Activated CD8-positive, alpha-beta T cell treated with anti-CD3 and anti-CD28 coated beads for 36 hours (primary cell): ENCODE measurements at regions of chr6 and their contacts with region 1.

Region 1: DNA sequence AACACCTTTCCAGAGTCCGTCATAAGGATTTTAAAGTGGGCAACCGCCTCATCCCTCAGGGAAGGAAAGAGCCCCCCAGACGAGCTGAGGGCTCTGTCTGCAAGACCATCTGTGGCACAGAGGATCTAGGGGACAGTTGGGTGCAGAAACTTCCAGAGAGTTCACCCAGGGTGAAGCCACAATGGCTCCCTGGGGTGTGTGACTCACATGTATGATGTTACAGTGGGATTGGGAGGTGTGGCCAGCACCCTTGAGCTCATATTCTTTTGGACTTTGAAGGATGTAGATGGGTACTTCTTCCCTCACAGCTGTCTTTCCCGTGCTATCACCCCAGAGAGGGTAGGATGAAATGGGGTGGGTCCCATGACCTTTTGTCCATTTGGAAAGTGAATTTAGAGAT is 95.5 kb downstream of the NCR2 start:
- DNase-seq: no peak
- ATAC-seq: no peak
- H3K4me3 Mint-ChIP-seq: no peak overlapping the region
- H3K27ac Mint-ChIP-seq: no peak overlapping the region
- H3K4me1 Mint-ChIP-seq: peaks cover 14% of the 10 kb centered on the region
- H3K27me3 Mint-ChIP-seq: peaks cover 19% of the 10 kb centered on the region
- CTCF ChIP-seq: no peak

Region 2: GRCh38 chr6:41280381-41281057 is 150.4 kb before region 1 on chr6:
- CTCF ChIA-PET with region 1: no interaction called
- POLR2A ChIA-PET with region 1: no interaction called
- intact Hi-C with region 1: no loop called
- DNase-seq: no peak
- ATAC-seq: no peak
- H3K4me3 Mint-ChIP-seq: no peak overlapping the region
- H3K27ac Mint-ChIP-seq: no peak overlapping the region
- H3K4me1 Mint-ChIP-seq: peaks cover 12% of the 10 kb centered on the region
- H3K27me3 Mint-ChIP-seq: no peaks in the 10 kb centered on the region
- CTCF ChIP-seq: no peak

Region 3: DNA sequence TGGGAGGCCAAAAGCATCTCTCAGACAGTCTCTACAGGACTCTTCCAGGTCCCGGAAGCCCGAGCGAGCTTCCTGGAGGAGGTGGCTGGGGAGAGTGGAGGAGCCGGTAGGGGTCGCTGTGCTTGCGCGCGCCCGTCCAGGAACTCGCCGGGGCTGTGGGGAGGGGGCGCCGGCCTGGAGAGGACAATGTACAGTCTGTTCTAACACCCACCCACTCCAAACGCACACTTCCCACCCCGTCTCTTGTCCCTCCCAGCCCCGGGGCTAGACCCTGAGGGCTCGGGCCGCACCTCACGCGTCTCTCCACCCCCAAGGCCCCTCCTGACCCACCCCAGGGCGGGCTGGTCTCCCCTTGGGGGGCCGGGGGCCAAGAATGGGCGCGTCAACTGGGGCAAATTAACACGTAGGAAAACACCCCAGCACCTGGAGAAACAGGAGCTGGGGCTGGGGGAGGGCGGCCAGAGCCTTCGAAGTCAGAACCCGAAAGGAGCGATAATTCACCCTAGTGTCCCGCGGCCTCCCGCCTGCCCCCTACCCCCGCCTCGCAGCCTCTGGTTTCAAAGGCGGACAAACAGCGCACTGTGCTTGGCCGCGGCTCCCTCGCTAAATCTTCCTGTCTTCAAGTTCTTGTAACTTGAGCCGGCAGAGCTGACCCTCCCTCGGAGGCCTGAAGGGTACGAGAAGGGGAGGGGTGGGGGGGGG is 12.1 kb after region 1 on chr6:
- CTCF ChIA-PET with region 1: interaction called, 28 read pairs
- POLR2A ChIA-PET with region 1: interaction called, 7 read pairs
- intact Hi-C with region 1: no loop called
- DNase-seq: peak; percentile 32
- ATAC-seq: no peak
- H3K4me3 Mint-ChIP-seq: no peak overlapping the region
- H3K27ac Mint-ChIP-seq: peak overlapping the region; percentile 17
- H3K4me1 Mint-ChIP-seq: peaks cover 36% of the 10 kb centered on the region
- H3K27me3 Mint-ChIP-seq: peaks cover 8% of the 10 kb centered on the region
- CTCF ChIP-seq: peak; percentile 76

Region 4: GRCh38 chr6:41836022-41836659 is 405.3 kb after region 1 on chr6:
- CTCF ChIA-PET with region 1: no interaction called
- POLR2A ChIA-PET with region 1: no interaction called
- intact Hi-C with region 1: no loop called
- DNase-seq: no peak
- ATAC-seq: no peak
- H3K4me3 Mint-ChIP-seq: no peak overlapping the region
- H3K27ac Mint-ChIP-seq: no peak overlapping the region
- H3K4me1 Mint-ChIP-seq: peaks cover 4% of the 10 kb centered on the region
- H3K27me3 Mint-ChIP-seq: no peaks in the 10 kb centered on the region
- CTCF ChIP-seq: no peak